GM18951 (cell line): ENCODE measurements at regions of chr6 and their contacts with region 1.

Region 1: GRCh38 chr6:37051138-37052026 is 45.9 kb downstream of the FGD2 start:
- POLR2A ChIP-seq: no peak

Region 2: DNA sequence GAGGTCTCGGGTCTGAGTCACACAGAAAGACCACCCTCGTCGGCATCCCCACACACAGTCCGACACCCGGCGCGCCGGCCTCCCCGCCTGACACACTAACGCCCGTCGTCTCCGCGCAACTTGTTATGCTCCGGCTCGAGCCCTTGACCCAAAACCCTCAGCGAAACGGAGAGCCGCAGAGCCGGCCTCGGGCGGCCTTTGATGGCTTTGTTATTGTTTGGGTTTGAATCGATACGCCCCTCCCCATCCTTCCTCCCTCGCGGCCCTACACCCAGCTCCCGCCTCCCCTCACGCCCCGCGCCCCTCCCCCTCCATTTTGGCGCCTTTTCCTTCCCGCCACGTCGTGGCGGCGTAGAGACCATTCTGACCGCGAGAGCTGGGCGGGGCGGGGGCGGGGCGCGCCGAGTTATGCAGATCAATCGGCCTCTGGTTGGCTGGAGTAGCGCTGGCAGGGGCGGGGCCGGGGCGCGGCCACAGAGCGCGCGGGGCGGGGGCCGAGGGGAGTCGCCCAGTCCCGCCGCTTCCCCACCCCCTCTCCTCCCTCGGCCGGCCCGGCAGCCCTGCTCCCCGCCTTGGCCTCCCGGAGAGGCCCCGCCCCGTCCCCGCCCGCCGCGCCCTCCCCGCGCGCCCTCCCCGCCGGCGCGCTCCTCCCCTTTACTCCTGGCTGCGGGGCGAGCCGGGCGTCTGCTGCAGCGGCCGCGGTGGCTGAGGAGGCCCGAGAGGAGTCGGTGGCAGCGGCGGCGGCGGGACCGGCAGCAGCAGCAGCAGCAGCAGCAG is 118.3 kb after region 1 on chr6 and contains the start of gene PIM1:
- in situ Hi-C with region 1: loop called (anchors 5 kb)
- POLR2A ChIP-seq: peak; percentile 80

Region 3: GRCh38 chr6:37314487-37315156 is 263.2 kb after region 1 on chr6:
- in situ Hi-C with region 1: no loop called
- POLR2A ChIP-seq: no peak